CD8-positive, alpha-beta T cell (primary cell): ENCODE measurements at regions of chr1 and their contacts with region 1.

Region 1: DNA sequence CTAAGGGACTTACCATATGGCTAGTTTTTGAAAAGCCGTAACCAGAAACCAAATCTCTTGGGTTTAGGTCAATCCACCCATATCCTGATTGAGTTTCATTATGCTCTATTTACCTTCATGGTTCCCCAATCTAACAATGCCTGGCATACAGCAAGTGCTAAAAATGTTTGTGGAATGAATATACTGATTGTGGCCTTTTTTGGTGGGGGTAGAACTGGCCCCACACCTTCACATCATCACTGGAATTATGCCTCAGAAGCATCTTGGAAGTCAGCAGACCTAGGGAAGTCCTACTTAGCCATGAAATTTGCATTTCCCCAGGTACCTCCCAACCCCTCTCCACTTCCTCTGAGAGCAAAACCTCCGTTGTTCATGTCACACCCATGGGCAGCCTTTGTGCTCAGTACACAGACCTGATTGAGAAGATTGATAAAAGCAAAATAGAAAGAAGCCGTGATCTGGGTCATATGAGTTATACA is 17.8 kb upstream of the SLAMF1 start:
- DNase-seq: peak in 4 of 9 experiments; percentile 35 to 66 (median 52)
- ATAC-seq: peak; percentile 82
- H3K4me3 ChIP-seq: no peak overlapping the region
- H3K4me3 Mint-ChIP-seq: peak overlapping the region; percentile 54
- H3K27ac ChIP-seq: peak overlapping the region in 1 of 2 experiments; percentile 59
- H3K27ac Mint-ChIP-seq: peak overlapping the region; percentile 75
- H3K4me1 ChIP-seq: peaks cover 43% of the 10 kb centered on the region
- H3K4me1 Mint-ChIP-seq: peaks cover 58% of the 10 kb centered on the region
- H3K27me3 ChIP-seq: no peaks in the 10 kb centered on the region
- H3K27me3 Mint-ChIP-seq: no peaks in the 10 kb centered on the region
- CTCF ChIP-seq: no peak

Region 2: DNA sequence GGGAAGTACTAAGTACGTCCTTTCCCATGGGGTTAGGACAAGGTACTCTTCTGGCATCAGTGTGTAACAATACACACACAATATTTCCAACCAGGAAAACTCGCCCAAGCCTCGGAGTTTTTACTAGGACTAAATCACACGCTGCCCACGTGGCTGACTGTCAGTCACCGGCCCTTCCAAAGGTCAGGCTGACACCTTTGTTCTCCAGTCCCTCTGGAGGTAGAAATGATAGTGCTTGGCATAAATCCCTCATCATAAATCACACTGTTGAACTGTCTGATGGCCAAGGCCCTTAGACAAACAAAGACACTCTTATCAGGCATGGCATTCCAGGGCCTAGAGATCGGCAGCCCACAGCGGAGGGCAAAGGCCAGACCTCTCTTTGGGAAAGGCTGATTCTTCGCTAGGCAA is 693.7 kb before region 1 on chr1:
- CTCF ChIA-PET with region 1: no interaction called
- POLR2A ChIA-PET with region 1: no interaction called
- intact Hi-C with region 1: no loop called
- DNase-seq: no peak
- ATAC-seq: no peak
- H3K4me3 ChIP-seq: no peak overlapping the region
- H3K4me3 Mint-ChIP-seq: no peak overlapping the region
- H3K27ac ChIP-seq: no peak overlapping the region
- H3K27ac Mint-ChIP-seq: no peak overlapping the region
- H3K4me1 ChIP-seq: no peaks in the 10 kb centered on the region
- H3K4me1 Mint-ChIP-seq: no peaks in the 10 kb centered on the region
- H3K27me3 ChIP-seq: no peaks in the 10 kb centered on the region
- H3K27me3 Mint-ChIP-seq: peaks cover 27% of the 10 kb centered on the region
- CTCF ChIP-seq: no peak

Region 3: DNA sequence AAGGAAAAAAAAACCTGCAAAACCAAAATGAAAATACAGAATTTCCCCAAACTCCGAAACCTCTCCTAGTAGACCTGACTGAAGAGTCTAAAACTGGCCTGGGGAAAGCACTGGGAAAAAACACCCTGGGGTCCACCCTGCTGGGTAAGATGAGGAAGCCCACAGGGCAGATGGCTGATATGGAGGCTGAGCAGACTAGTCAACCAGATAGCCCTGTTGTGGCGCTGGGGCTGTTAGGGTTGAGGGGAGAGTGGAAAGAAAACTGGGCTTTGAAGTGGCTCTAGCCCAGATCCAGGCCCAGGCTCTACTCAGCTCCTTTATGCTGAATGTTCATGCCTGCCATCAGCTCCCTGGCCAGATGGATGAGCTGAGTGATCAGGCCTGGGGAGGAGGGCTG is 11.0 kb before region 1 on chr1:
- CTCF ChIA-PET with region 1: no interaction called
- POLR2A ChIA-PET with region 1: no interaction called
- intact Hi-C with region 1: loop called in 1 of 2 experiments (anchors 2 kb)
- DNase-seq: no peak
- ATAC-seq: no peak
- H3K4me3 ChIP-seq: no peak overlapping the region
- H3K4me3 Mint-ChIP-seq: no peak overlapping the region
- H3K27ac ChIP-seq: no peak overlapping the region
- H3K27ac Mint-ChIP-seq: no peak overlapping the region
- H3K4me1 ChIP-seq: peaks cover 39% of the 10 kb centered on the region
- H3K4me1 Mint-ChIP-seq: peaks cover 79% of the 10 kb centered on the region
- H3K27me3 ChIP-seq: no peaks in the 10 kb centered on the region
- H3K27me3 Mint-ChIP-seq: no peaks in the 10 kb centered on the region
- CTCF ChIP-seq: no peak

Region 4: DNA sequence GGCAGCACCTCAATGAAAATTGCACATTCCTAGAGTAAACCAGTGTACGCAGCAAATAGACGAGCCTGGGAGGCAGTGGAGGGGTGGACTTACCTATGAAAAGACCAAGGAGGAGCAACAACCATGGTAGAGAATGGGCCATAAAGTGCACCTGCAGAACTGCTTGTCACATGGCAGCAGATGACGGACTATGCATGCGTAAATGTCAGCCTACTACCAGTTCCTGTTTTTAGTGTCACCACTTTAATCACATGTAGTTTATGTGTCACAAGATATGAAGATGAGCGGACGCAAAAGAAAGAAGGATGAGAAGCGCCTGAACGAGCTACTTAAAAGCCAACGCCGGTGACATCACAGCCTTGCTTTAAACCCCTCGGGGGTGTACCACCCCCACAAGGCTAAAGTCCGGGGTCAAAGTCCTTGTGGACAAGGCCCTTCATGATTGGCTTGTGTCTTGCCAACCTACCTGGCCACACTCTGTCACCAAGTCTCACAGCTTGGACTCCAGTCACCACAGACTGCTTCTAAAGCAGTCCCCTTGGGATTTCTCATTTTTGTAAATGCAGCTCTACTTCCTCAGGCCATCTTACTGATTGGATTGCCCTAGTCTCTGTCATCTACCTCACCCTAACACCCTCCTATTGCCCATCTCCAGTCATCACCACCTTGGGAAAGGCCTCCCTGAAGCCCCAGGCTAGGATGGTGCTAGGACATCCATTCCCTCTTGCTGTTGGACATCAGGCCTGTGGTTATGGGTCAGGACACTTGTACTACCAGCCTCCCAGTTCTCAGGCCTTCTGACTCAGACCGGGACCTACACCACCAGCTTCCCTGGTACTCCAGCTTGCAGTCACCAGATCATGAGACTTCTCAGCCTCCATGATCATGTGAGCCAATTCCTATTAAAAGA is 125.3 kb after region 1 on chr1:
- CTCF ChIA-PET with region 1: no interaction called
- POLR2A ChIA-PET with region 1: no interaction called
- intact Hi-C with region 1: no loop called
- DNase-seq: peak in 1 of 9 experiments; percentile 50
- ATAC-seq: peak; percentile 26
- H3K4me3 ChIP-seq: no peak overlapping the region
- H3K4me3 Mint-ChIP-seq: no peak overlapping the region
- H3K27ac ChIP-seq: peak overlapping the region in 1 of 2 experiments; percentile 30
- H3K27ac Mint-ChIP-seq: peak overlapping the region; percentile 20
- H3K4me1 ChIP-seq: peaks cover 3% of the 10 kb centered on the region
- H3K4me1 Mint-ChIP-seq: peaks cover 18% of the 10 kb centered on the region
- H3K27me3 ChIP-seq: no peaks in the 10 kb centered on the region
- H3K27me3 Mint-ChIP-seq: no peaks in the 10 kb centered on the region
- CTCF ChIP-seq: no peak

Region 5: GRCh38 chr1:161098210-161099068 is 433.8 kb after region 1 on chr1 and contains the start of gene KLHDC9:
- CTCF ChIA-PET with region 1: no interaction called
- POLR2A ChIA-PET with region 1: no interaction called
- intact Hi-C with region 1: no loop called
- DNase-seq: peak; percentile 16 to 87 (median 68)
- ATAC-seq: peak; percentile 67
- H3K4me3 ChIP-seq: peak within 1 kb of the TSS; percentile 54 to 65
- H3K4me3 Mint-ChIP-seq: peak within 1 kb of the TSS; percentile 89
- H3K27ac ChIP-seq: peak within 1 kb of the TSS in 1 of 2 experiments; percentile 47
- H3K27ac Mint-ChIP-seq: peak within 1 kb of the TSS; percentile 92
- H3K4me1 ChIP-seq: peaks cover 14% of the 10 kb centered on the region
- H3K4me1 Mint-ChIP-seq: peaks cover 24% of the 10 kb centered on the region
- H3K27me3 ChIP-seq: no peaks in the 10 kb centered on the region
- H3K27me3 Mint-ChIP-seq: no peaks in the 10 kb centered on the region
- CTCF ChIP-seq: no peak
- total RNA-seq, gene KLHDC9: not detected